Activated CD4-positive, alpha-beta T cell treated with anti-CD3 and anti-CD28 coated beads for 36 hours (primary cell): ENCODE measurements at regions of chr3 and their contacts with region 1.

Region 1: GRCh38 chr3:40580494-40581091 is 55.8 kb downstream of the ZNF621 start:
- DNase-seq: peak; percentile 79
- ATAC-seq: peak; percentile 88
- H3K4me3 Mint-ChIP-seq: no peak overlapping the region
- H3K27ac Mint-ChIP-seq: no peak overlapping the region
- H3K4me1 Mint-ChIP-seq: peaks cover 2% of the 10 kb centered on the region
- H3K27me3 Mint-ChIP-seq: peaks cover 8% of the 10 kb centered on the region

Region 2: GRCh38 chr3:40505599-40506462 is 74.8 kb before region 1 on chr3 and contains the start of gene ZNF620:
- CTCF ChIA-PET with region 1: no interaction called
- POLR2A ChIA-PET with region 1: no interaction called
- intact Hi-C with region 1: no loop called
- DNase-seq: peak; percentile 59
- ATAC-seq: peak; percentile 67
- H3K4me3 Mint-ChIP-seq: peak within 1 kb of the TSS; percentile 86
- H3K27ac Mint-ChIP-seq: peak within 1 kb of the TSS; percentile 92
- H3K4me1 Mint-ChIP-seq: peaks cover 29% of the 10 kb centered on the region
- H3K27me3 Mint-ChIP-seq: no peaks in the 10 kb centered on the region
- total RNA-seq, gene ZNF620: 3.8 to 3.9 TPM

Region 3: GRCh38 chr3:40741729-40742128 is 161.1 kb after region 1 on chr3:
- CTCF ChIA-PET with region 1: no interaction called
- POLR2A ChIA-PET with region 1: no interaction called
- intact Hi-C with region 1: loop called in 1 of 2 experiments (anchors 10 kb)
- DNase-seq: no peak
- ATAC-seq: no peak
- H3K4me3 Mint-ChIP-seq: no peak overlapping the region
- H3K27ac Mint-ChIP-seq: no peak overlapping the region
- H3K4me1 Mint-ChIP-seq: no peaks in the 10 kb centered on the region
- H3K27me3 Mint-ChIP-seq: peaks cover under 1% of the 10 kb centered on the region

Region 4: GRCh38 chr3:41267975-41268663 is 687.5 kb after region 1 on chr3:
- CTCF ChIA-PET with region 1: no interaction called
- POLR2A ChIA-PET with region 1: no interaction called
- intact Hi-C with region 1: loop called in 1 of 2 experiments (anchors 10 kb)
- DNase-seq: no peak
- ATAC-seq: no peak
- H3K4me3 Mint-ChIP-seq: no peak overlapping the region
- H3K27ac Mint-ChIP-seq: no peak overlapping the region
- H3K4me1 Mint-ChIP-seq: no peaks in the 10 kb centered on the region
- H3K27me3 Mint-ChIP-seq: no peaks in the 10 kb centered on the region